Caco-2 (cell line): ENCODE measurements at regions of chr13 and their contacts with region 1.

Region 1: GRCh38 chr13:19587635-19588300 is 26.4 kb upstream of the TPTE2 start:
- DNase-seq: peak; percentile 58 to 66
- H3K4me3 ChIP-seq: no peak overlapping the region
- H3K4me3 Mint-ChIP-seq: no peak overlapping the region
- H3K27ac Mint-ChIP-seq: no peak overlapping the region
- H3K4me1 ChIP-seq: peaks cover 2% of the 10 kb centered on the region; the same call in 1 of the 2 replicates
- H3K4me1 Mint-ChIP-seq: peaks cover 6% of the 10 kb centered on the region
- H3K27me3 ChIP-seq: no peaks in the 10 kb centered on the region
- H3K27me3 Mint-ChIP-seq: no peaks in the 10 kb centered on the region
- CTCF ChIP-seq: peak; percentile 58 to 77

Region 2: GRCh38 chr13:19089315-19089714 is 498.5 kb before region 1 on chr13:
- CTCF ChIA-PET with region 1: interaction called, 6 read pairs
- POLR2A ChIA-PET with region 1: no interaction called
- intact Hi-C with region 1: loop called (anchors 1 kb)
- DNase-seq: peak in 1 of 2 experiments; percentile 30
- H3K4me3 ChIP-seq: no peak overlapping the region
- H3K4me3 Mint-ChIP-seq: no peak overlapping the region
- H3K27ac Mint-ChIP-seq: no peak overlapping the region
- H3K4me1 ChIP-seq: no peaks in the 10 kb centered on the region
- H3K4me1 Mint-ChIP-seq: no peaks in the 10 kb centered on the region
- H3K27me3 ChIP-seq: no peaks in the 10 kb centered on the region
- H3K27me3 Mint-ChIP-seq: no peaks in the 10 kb centered on the region
- CTCF ChIP-seq: no peak

Region 3: GRCh38 chr13:19153782-19154450 is 433.9 kb before region 1 on chr13:
- CTCF ChIA-PET with region 1: no interaction called
- POLR2A ChIA-PET with region 1: no interaction called
- intact Hi-C with region 1: loop called (anchors 10 kb)
- DNase-seq: no peak
- H3K4me3 ChIP-seq: no peak overlapping the region
- H3K4me3 Mint-ChIP-seq: no peak overlapping the region
- H3K27ac Mint-ChIP-seq: no peak overlapping the region
- H3K4me1 ChIP-seq: no peaks in the 10 kb centered on the region
- H3K4me1 Mint-ChIP-seq: no peaks in the 10 kb centered on the region
- H3K27me3 ChIP-seq: no peaks in the 10 kb centered on the region
- H3K27me3 Mint-ChIP-seq: no peaks in the 10 kb centered on the region
- CTCF ChIP-seq: peak in 1 of 2 experiments; percentile 16

Region 4: DNA sequence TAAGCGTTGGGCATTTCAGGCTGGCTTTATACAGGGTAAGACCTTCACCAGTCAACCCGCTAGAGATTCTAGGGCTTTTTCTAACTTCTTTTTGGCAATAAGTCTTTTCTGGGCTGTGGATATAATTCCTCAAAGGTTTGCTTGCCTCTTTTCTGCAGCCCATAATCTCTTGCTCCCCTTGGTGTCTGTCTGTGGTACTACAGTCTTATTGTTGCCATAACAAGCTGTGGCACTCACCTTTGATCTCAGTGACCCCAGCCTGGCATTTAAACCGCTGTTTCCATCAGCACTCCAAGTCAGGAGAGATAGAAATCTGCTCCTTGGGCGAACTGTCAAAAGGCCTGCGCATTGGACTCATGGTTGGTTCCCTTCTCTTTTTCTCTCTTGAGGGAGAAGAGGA is 31.2 kb after region 1 on chr13:
- CTCF ChIA-PET with region 1: interaction called, 10 read pairs
- POLR2A ChIA-PET with region 1: no interaction called
- intact Hi-C with region 1: loop called (anchors 1 kb)
- DNase-seq: peak in 1 of 2 experiments; percentile 68
- H3K4me3 ChIP-seq: no peak overlapping the region
- H3K4me3 Mint-ChIP-seq: no peak overlapping the region
- H3K27ac Mint-ChIP-seq: no peak overlapping the region
- H3K4me1 ChIP-seq: peaks cover 4% of the 10 kb centered on the region; the same call in 1 of the 2 replicates
- H3K4me1 Mint-ChIP-seq: peaks cover 31% of the 10 kb centered on the region
- H3K27me3 ChIP-seq: no peaks in the 10 kb centered on the region
- H3K27me3 Mint-ChIP-seq: no peaks in the 10 kb centered on the region
- CTCF ChIP-seq: peak; percentile 48 to 67

Region 5: GRCh38 chr13:19888799-19889198 is 301.0 kb after region 1 on chr13:
- CTCF ChIA-PET with region 1: no interaction called
- POLR2A ChIA-PET with region 1: no interaction called
- intact Hi-C with region 1: loop called (anchors 1 kb)
- DNase-seq: no peak
- H3K4me3 ChIP-seq: no peak overlapping the region
- H3K4me3 Mint-ChIP-seq: no peak overlapping the region
- H3K27ac Mint-ChIP-seq: no peak overlapping the region
- H3K4me1 ChIP-seq: no peaks in the 10 kb centered on the region
- H3K4me1 Mint-ChIP-seq: no peaks in the 10 kb centered on the region
- H3K27me3 ChIP-seq: no peaks in the 10 kb centered on the region
- H3K27me3 Mint-ChIP-seq: no peaks in the 10 kb centered on the region
- CTCF ChIP-seq: peak in 1 of 2 experiments; percentile 6